CD4-positive, alpha-beta memory T cell (primary cell): ENCODE measurements at regions of chr5 and their contacts with region 1.

Region 1: DNA sequence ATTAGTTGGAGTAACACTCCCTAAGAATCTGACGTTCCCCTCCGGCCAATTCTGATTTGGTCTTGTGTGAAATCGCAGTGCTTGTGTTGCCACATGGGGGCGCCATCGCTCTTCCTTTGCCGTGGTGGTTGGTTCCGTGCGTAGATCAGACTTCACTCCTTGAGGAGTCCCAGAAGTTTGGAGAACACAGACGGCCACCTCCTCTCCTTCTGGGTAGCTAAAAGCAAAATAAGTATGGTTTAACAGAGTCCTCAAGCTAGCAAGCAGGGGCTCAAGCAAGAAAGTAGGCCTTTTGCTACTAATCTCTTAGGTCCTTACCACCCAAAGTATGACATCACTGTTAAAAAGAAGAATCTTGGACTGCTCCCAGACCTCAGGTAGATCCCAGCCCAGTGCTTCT is 59.5 kb downstream of the HSPA4 start:
- DNase-seq: peak; percentile 72 to 76 (median 74)
- H3K4me3 ChIP-seq: no peak overlapping the region
- H3K4me3 Mint-ChIP-seq: peak overlapping the region in 4 of 8 donors; percentile 2 to 77 (median 4)
- H3K27ac ChIP-seq: no peak overlapping the region
- H3K27ac Mint-ChIP-seq: peak overlapping the region in 2 of 7 donors; percentile 80 to 84
- H3K4me1 ChIP-seq: peaks cover 17% of the 10 kb centered on the region
- H3K4me1 Mint-ChIP-seq: peaks cover 21 to 27% (median 22%) of the 10 kb centered on the region in 4 donors
- H3K27me3 ChIP-seq: no peaks in the 10 kb centered on the region
- H3K27me3 Mint-ChIP-seq: no peaks in the 10 kb centered on the region

Region 2: GRCh38 chr5:132947671-132948070 is 163.6 kb before region 1 on chr5:
- CTCF ChIA-PET with region 1: no interaction called
- POLR2A ChIA-PET with region 1: no interaction called
- intact Hi-C with region 1: no loop called
- DNase-seq: no peak
- H3K4me3 ChIP-seq: no peak overlapping the region
- H3K4me3 Mint-ChIP-seq: no peak overlapping the region
- H3K27ac ChIP-seq: no peak overlapping the region
- H3K27ac Mint-ChIP-seq: peak overlapping the region in 1 of 7 donors; percentile 9
- H3K4me1 ChIP-seq: peaks cover 23% of the 10 kb centered on the region
- H3K4me1 Mint-ChIP-seq: peaks cover 40 to 75% (median 55%) of the 10 kb centered on the region in 4 donors
- H3K27me3 ChIP-seq: no peaks in the 10 kb centered on the region
- H3K27me3 Mint-ChIP-seq: no peaks in the 10 kb centered on the region

Region 3: GRCh38 chr5:133164759-133165158 is 53.5 kb after region 1 on chr5:
- CTCF ChIA-PET with region 1: no interaction called
- POLR2A ChIA-PET with region 1: no interaction called
- intact Hi-C with region 1: no loop called
- DNase-seq: no peak
- H3K4me3 ChIP-seq: no peak overlapping the region
- H3K4me3 Mint-ChIP-seq: peak overlapping the region in 6 of 8 donors; percentile 0 to 72 (median 56)
- H3K27ac ChIP-seq: no peak overlapping the region
- H3K27ac Mint-ChIP-seq: peak overlapping the region in 2 of 7 donors; percentile 8 to 84
- H3K4me1 ChIP-seq: peaks cover 14% of the 10 kb centered on the region
- H3K4me1 Mint-ChIP-seq: peaks cover 10 to 24% (median 11%) of the 10 kb centered on the region in 4 donors
- H3K27me3 ChIP-seq: no peaks in the 10 kb centered on the region
- H3K27me3 Mint-ChIP-seq: peaks cover 0 to 4% of the 10 kb centered on the region in 2 donors

Region 4: GRCh38 chr5:133196441-133197085 is 85.3 kb after region 1 on chr5:
- CTCF ChIA-PET with region 1: interaction called, 31 read pairs
- POLR2A ChIA-PET with region 1: no interaction called
- intact Hi-C with region 1: loop called (anchors 1 kb)
- DNase-seq: no peak
- H3K4me3 ChIP-seq: no peak overlapping the region
- H3K4me3 Mint-ChIP-seq: no peak overlapping the region
- H3K27ac ChIP-seq: no peak overlapping the region
- H3K27ac Mint-ChIP-seq: no peak overlapping the region
- H3K4me1 ChIP-seq: no peaks in the 10 kb centered on the region
- H3K4me1 Mint-ChIP-seq: peaks cover 0 to 3% (median under 1%) of the 10 kb centered on the region in 4 donors
- H3K27me3 ChIP-seq: no peaks in the 10 kb centered on the region
- H3K27me3 Mint-ChIP-seq: peaks cover 2 to 8% of the 10 kb centered on the region in 2 donors

Region 5: DNA sequence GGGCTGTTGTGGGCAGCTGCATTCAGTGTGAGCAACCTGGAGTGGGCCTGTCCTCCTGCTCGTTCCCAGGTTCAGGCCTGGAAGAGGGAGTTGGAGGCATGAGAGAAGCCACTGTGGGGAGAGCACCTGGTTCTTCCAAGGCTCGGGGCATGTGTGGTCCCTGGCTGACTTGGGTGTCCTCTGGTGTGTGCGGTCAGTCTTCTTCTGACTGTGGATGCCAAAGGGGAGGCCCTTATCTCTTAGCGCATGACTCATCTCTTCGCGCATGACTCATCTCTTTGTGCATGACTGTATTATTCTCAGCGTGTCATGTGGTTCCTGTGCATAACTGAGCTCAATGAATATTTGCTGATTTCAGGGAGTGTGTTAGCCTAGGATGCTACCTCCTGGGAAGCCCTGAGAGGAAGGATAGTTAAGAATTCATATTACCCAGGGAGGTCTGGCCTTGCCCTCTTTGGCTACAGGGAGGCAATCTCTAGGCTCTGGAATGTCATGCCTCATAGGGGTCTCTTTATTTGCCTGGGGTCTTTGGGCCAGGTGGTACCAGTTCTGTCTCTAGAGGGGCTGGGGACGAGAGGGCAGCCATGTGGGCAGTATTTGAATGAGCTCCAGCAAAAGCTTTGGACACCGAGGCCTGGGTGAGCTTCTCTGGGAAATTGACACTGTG is 129.3 kb after region 1 on chr5:
- CTCF ChIA-PET with region 1: interaction called, 10 read pairs
- POLR2A ChIA-PET with region 1: no interaction called
- intact Hi-C with region 1: loop called (anchors 10 kb)
- DNase-seq: no peak
- H3K4me3 ChIP-seq: no peak overlapping the region
- H3K4me3 Mint-ChIP-seq: no peak overlapping the region
- H3K27ac ChIP-seq: no peak overlapping the region
- H3K27ac Mint-ChIP-seq: no peak overlapping the region
- H3K4me1 ChIP-seq: no peaks in the 10 kb centered on the region
- H3K4me1 Mint-ChIP-seq: peaks cover 0 to 19% (median 3%) of the 10 kb centered on the region in 4 donors
- H3K27me3 ChIP-seq: no peaks in the 10 kb centered on the region
- H3K27me3 Mint-ChIP-seq: peaks cover 1 to 3% of the 10 kb centered on the region in 2 donors

Region 6: GRCh38 chr5:133319905-133320520 is 208.7 kb after region 1 on chr5:
- CTCF ChIA-PET with region 1: interaction called, 6 read pairs
- POLR2A ChIA-PET with region 1: no interaction called
- intact Hi-C with region 1: loop called (anchors 1 kb)
- DNase-seq: no peak
- H3K4me3 ChIP-seq: no peak overlapping the region
- H3K4me3 Mint-ChIP-seq: no peak overlapping the region
- H3K27ac ChIP-seq: no peak overlapping the region
- H3K27ac Mint-ChIP-seq: peak overlapping the region in 1 of 7 donors; percentile 25
- H3K4me1 ChIP-seq: no peaks in the 10 kb centered on the region
- H3K4me1 Mint-ChIP-seq: peaks cover 6 to 15% (median 9%) of the 10 kb centered on the region in 4 donors
- H3K27me3 ChIP-seq: no peaks in the 10 kb centered on the region
- H3K27me3 Mint-ChIP-seq: peaks cover 0 to 1% of the 10 kb centered on the region in 2 donors

Region 7: DNA sequence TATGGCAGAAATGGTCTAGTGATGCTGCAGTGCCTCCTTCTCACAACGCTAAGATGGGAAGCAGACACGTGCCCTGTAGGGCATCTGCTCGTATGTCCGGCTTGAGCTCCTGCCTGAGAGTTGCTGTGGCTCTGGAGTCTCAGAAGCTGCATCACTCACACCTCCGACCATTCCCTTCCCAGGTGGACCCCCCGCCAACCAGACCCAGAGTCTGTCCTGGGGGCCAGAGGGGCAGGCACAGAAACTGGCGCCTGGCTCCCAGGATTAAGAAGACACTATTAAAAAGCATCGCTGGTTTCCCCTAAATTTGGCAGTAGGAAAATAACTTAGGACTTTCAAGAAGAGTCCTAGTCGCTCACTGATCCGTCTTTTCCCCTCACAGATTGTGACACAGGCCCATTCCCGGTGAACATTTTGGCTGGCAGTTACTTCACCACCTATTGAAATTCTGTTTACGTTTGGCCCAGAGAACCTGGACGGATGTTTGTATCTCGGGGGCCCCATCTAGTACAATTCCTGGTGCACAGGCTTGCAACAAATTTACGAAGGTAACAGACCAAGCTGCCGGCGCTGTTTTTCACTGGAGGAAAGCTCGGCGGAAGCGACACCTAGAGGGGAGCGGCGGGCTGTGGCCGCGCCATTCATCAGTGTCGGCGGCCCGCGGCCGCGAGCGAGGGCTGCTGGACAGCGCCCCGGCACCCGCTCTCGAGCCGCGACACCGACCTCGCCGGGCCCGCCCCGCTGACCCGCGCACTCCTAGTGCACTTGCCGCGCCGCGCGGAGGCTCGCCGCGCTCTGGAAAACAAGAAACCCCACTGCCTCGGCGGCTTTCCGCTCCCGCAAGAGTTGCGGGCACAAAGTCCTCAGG is 499.4 kb after region 1 on chr5:
- CTCF ChIA-PET with region 1: no interaction called
- POLR2A ChIA-PET with region 1: no interaction called
- intact Hi-C with region 1: loop called (anchors 5 kb)
- DNase-seq: peak in 4 of 5 donors; percentile 15 to 23 (median 20)
- H3K4me3 ChIP-seq: peak overlapping the region; percentile 17 to 27
- H3K4me3 Mint-ChIP-seq: peak overlapping the region; percentile 68 to 84 (median 76)
- H3K27ac ChIP-seq: no peak overlapping the region
- H3K27ac Mint-ChIP-seq: no peak overlapping the region
- H3K4me1 ChIP-seq: peaks cover 10% of the 10 kb centered on the region
- H3K4me1 Mint-ChIP-seq: peaks cover 5 to 23% (median 14%) of the 10 kb centered on the region in 4 donors
- H3K27me3 ChIP-seq: peaks cover 18% of the 10 kb centered on the region
- H3K27me3 Mint-ChIP-seq: peaks cover 33 to 44% of the 10 kb centered on the region in 2 donors